AG04450 (cell line): ENCODE measurements at regions of chr11 and their contacts with region 1.

Region 1: DNA sequence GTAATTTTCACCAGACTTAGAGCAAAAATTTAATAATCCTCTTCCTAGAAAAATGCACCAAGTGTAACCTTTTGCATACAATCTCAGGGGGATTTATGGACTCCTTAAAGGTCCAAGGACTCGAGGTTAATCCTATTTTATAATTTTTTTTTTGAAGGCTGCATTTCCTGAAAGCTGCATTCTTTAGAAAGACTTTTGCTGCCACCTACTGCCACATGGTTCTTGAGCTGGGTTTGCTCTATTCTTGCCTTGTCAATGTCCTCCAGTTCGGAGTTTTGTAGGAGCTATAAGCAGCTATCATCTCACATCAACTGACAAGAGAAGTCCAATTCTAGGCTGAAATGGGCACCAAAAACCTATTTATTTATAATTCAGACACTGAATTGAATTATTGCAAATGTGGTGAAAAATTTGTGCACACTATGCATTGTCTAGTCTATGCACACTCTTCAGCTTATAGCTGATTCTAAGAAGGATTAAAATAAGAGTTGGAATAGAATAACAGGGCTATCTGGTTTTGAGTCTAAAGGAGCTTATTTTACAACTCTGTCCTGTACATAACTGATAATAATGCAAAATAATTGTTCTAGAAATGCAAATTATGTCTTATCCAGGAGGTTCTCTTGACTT is 31.3 kb downstream of the TRAF6 start:
- DNase-seq: no peak
- H3K4me3 ChIP-seq: no peak overlapping the region
- H3K27ac ChIP-seq: no peak overlapping the region
- H3K27me3 ChIP-seq: no peaks in the 10 kb centered on the region
- CTCF ChIP-seq: peak; percentile 77

Region 2: DNA sequence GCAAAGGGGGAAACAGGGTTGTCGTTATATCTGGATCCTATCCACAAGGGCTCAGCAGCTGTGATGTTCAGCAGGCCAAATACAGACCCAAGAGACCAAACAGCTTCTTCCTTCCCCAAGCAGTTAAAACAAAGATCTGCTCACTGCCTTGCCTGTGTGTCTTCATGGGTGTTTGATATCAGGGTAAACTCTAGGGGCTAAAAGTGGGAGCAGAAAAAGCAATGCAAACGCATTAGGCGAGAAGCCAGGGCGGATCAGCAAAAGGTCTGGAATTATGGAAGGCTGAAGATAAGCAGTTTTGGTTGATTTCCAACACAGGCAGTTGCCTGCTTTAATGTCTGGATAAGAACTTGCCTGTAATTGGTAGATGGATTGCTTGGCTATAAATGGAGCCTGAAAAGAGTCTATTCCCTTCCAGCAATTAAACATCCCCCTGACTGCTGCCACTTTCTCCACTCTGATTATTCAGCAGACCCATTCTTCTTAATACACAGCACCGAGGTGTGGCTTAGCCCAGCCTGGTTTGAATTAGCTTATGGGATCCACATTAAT is 315.9 kb before region 1 on chr11:
- CTCF ChIA-PET with region 1: no interaction called
- POLR2A ChIA-PET with region 1: no interaction called
- DNase-seq: no peak
- H3K4me3 ChIP-seq: no peak overlapping the region
- H3K27ac ChIP-seq: no peak overlapping the region
- H3K27me3 ChIP-seq: no peaks in the 10 kb centered on the region
- CTCF ChIP-seq: no peak

Region 3: DNA sequence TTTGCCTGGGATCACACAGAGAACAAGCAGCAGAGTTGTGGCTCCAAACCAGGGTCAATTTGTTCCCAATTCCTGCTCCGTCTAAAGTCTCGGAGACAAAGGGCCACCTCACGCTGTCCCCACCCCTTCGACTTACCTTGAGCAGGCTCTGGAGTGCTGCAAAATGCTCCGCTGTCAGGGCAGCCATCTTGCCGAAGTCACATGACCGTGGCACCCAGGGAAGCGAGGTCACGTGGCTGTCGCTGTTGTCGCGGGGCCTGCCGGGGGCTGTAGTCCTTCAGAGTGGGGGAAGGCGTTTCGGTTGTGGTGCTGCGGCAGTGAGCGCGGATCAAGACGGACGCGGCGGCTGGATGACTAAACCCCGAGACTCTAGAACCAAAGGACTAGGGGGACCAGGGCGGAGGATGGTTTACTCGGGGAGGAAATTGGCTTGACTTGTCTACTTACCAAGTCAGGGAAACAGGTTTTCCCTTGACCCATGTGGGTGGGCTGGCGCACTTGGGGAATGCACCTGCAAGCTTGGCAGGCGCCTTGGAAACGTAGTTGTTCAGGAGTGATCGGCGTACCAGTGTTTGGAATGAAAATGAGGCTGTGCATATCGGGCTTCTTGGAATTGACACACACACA is 189.5 kb before region 1 on chr11 and contains the start of gene COMMD9:
- CTCF ChIA-PET with region 1: interaction called, 279 read pairs
- POLR2A ChIA-PET with region 1: no interaction called
- DNase-seq: peak; percentile 79
- H3K4me3 ChIP-seq: peak within 1 kb of the TSS; percentile 98
- H3K27ac ChIP-seq: no peak within 1 kb of the TSS
- H3K27me3 ChIP-seq: no peaks in the 10 kb centered on the region
- CTCF ChIP-seq: no peak
- polyA plus RNA-seq, gene COMMD9: 51.5 and 73.0 TPM in 2 replicates

Region 4: DNA sequence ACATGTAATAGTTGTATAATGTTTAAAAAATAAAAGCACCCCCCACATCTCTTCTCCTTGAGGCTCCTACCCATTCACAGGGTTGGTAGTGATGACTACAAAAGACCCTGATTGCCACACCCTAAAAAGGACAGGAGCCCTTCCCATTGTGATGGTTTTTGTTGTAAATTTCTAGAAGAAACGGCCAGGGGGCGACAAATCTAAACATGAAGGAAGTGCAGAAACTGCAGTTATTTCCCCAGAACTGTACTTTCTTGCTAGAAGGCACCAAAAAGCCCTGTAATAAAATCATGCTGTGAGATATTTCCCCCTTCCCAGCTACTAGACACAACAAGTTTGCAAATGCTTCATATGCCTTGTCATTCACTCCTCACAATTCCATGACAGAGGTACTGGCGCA is 171.9 kb before region 1 on chr11:
- CTCF ChIA-PET with region 1: interaction called, 24 read pairs
- POLR2A ChIA-PET with region 1: no interaction called
- DNase-seq: no peak
- H3K4me3 ChIP-seq: no peak overlapping the region
- H3K27ac ChIP-seq: no peak overlapping the region
- H3K27me3 ChIP-seq: peaks cover 2% of the 10 kb centered on the region
- CTCF ChIP-seq: peak; percentile 74

Region 5: DNA sequence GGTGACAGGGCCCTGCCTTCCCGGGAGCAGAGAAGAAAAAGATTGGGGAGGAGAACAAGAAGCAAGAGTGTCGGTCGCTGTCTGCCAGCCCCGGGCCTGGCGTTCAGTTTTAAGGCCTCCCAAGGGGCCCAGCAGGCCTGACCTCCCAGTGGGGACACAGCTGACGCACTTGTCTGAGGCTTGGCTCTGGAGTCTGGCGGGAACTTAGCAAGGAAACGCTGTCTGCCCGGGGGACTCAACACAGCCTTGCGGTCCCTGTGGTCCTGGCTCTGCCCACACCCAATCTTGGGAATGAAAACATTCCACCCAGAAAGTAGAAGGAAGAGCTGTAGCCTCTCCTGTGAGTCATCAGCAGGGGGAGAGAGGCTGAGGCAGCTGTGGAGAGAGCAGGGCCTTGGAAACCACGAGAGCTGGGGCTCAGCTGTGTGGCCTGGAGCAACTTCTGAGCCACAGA is 23.1 kb before region 1 on chr11:
- CTCF ChIA-PET with region 1: interaction called, 19 read pairs
- POLR2A ChIA-PET with region 1: interaction called, 3 read pairs
- DNase-seq: peak; percentile 87
- H3K4me3 ChIP-seq: 0 out of 2 replicates have a peak overlapping the region, but pooled peaks have one; percentile 20
- H3K27ac ChIP-seq: peak overlapping the region; percentile 95
- H3K27me3 ChIP-seq: no peaks in the 10 kb centered on the region
- CTCF ChIP-seq: no peak